Activated CD4-positive, alpha-beta memory T cell treated with anti-CD3 and anti-CD28 coated beads, Interleukin-2, amount 10 ng/mL, durations not matched to agents 7 days and 5 days (primary cell): ENCODE measurements at regions of chr3 and their contacts with region 1.

Region 1: GRCh38 chr3:152281133-152281713 is 12.5 kb downstream of the MBNL1 start:
- DNase-seq: no peak
- H3K4me3 Mint-ChIP-seq: peak overlapping the region; percentile 15
- H3K27ac Mint-ChIP-seq: peak overlapping the region; percentile 68
- H3K4me1 Mint-ChIP-seq: peaks cover 79% of the 10 kb centered on the region
- H3K27me3 Mint-ChIP-seq: no peaks in the 10 kb centered on the region

Region 2: DNA sequence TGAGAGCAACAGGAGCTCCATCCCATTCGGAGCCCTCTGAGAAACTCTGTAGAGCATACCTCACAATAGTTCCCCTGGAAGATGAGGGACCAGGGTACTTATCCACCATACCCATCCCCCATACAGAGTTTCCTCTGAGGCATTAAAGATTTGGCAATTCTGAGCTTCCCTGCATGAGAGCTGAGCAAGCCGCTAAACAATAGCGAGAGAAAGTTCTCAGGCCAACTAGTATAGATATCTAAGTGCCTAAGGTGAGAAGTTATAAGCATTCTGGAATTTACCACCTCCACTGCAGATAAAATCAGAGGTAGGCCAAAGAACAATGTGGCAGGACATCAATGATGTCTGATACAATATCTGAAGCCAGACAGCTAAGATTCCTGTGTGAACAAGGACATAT is 141.6 kb before region 1 on chr3:
- CTCF ChIA-PET with region 1: no interaction called
- POLR2A ChIA-PET with region 1: no interaction called
- DNase-seq: no peak
- H3K4me3 Mint-ChIP-seq: no peak overlapping the region
- H3K27ac Mint-ChIP-seq: no peak overlapping the region
- H3K4me1 Mint-ChIP-seq: no peaks in the 10 kb centered on the region
- H3K27me3 Mint-ChIP-seq: peaks cover 2% of the 10 kb centered on the region

Region 3: DNA sequence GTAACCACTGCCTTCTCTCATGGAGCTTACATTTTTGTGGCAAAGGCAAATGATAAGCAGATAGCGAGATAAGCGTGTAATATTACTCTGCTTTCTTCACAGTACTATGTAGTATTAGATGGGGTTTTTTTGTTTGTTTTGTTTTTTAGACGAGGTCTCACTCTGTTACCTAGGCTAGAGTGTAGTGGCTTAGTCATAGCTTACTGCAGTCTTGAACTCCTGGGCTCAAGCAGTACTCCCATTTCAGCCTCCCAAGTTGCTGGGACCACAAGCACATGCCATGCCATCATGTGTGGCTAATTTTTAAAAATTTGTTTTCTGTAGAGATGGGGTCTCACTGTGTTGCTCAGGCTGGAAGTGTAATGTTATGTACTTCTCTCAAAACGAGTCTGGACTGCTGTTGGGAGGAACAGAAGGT is 10.4 kb after region 1 on chr3:
- CTCF ChIA-PET with region 1: interaction called, 5 read pairs
- POLR2A ChIA-PET with region 1: interaction called, 179 read pairs
- DNase-seq: no peak
- H3K4me3 Mint-ChIP-seq: no peak overlapping the region
- H3K27ac Mint-ChIP-seq: peak overlapping the region; percentile 36
- H3K4me1 Mint-ChIP-seq: peaks cover 80% of the 10 kb centered on the region
- H3K27me3 Mint-ChIP-seq: no peaks in the 10 kb centered on the region

Region 4: DNA sequence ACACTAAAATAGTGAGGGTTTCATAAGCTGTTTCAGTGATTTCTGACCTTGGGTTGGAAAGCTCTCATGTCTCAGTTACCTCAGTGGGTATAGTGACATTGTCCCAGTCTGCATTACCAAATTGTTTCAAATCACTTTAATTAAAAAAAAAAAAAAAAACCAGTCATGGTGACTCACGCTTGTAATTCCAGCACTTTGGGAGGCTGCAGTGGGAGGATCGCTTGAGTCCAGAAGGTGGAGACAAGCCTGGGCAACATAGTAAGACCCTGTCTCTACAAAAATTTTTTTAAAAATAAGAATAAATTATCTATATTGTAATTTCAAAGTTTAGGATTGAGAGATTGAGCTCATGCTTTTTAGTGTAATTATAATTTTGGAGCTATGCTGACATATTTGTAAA is 65.5 kb after region 1 on chr3:
- CTCF ChIA-PET with region 1: no interaction called
- POLR2A ChIA-PET with region 1: no interaction called
- DNase-seq: no peak
- H3K4me3 Mint-ChIP-seq: no peak overlapping the region
- H3K27ac Mint-ChIP-seq: no peak overlapping the region
- H3K4me1 Mint-ChIP-seq: peaks cover 23% of the 10 kb centered on the region
- H3K27me3 Mint-ChIP-seq: no peaks in the 10 kb centered on the region